Activated T-helper 1 cell treated with anti-CD3 and anti-CD28 coated beads, Interleukin-12 subunit alpha, Interleukin-12 subunit beta, Interleukin-2, Interleukin-4 antibody, amounts not matched to agents 30 ng/mL and 10 ng/mL and 1 ng/mL, durations not matched to agents 14 hours and 24 hours and 36 hours (primary cell): ENCODE measurements at regions of chr2 and their contacts with region 1.

Region 1: DNA sequence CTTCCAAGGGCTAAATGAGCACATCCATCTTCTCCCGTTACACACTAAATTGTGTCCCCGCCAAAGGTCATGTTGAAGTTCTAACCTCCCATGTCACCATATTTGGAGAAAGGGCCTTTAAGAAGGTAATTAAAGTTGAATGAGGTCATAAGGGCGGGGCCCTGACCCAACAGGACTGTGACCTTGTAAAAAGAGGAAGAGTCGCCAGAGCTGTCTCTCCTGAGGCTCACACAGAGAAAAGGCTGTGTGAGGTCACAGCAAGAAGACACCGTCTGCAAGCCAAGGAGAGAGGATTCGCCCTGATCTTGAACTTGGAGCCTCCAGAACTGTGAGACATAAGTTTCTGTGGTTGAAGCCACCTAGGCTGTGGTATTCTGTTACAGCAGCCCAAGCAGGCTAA is 24.1 kb downstream of the TRABD2A start:
- DNase-seq: peak; percentile 33
- H3K4me3 Mint-ChIP-seq: peak overlapping the region; percentile 72
- H3K27ac Mint-ChIP-seq: peak overlapping the region; percentile 83
- H3K4me1 Mint-ChIP-seq: peaks cover 85% of the 10 kb centered on the region
- H3K27me3 Mint-ChIP-seq: no peaks in the 10 kb centered on the region

Region 2: DNA sequence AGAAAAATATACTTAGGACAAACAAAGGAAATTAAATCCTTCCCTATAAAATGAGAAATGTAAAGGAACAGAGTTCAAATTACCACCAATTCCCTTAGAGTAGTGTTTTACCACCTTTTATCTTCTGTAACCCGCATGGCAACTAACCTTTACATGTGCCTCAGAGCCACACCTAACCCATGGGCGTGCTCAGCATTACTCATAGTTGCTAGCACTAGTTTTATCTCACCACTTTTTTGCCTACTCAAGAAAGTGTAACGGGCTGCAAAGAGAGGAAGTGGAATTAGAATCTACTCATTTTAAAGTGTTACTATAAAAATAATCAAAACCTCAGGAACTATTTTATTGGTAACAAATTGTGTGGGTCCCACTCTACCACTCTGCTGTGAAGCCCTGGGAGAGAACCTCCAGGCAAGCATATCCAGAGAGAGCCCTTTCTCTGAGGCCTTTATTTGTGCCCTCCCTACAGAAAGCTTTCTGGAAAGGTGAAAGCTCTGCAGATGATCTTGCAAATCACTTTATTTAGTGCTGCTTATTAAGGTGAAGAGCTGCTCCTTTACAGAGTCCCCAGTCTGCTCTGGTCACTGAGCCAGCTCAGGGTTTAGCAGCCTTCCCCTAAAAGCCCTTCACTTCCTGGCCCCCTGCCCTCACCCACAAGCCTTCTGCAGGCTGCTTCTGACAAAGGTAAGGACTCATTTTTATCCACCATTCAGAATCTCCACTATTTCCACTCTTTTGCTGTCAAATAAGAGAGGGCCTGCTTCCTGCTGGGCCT is 74.7 kb before region 1 on chr2:
- intact Hi-C with region 1: no loop called
- DNase-seq: peak; percentile 44
- H3K4me3 Mint-ChIP-seq: no peak overlapping the region
- H3K27ac Mint-ChIP-seq: peak overlapping the region; percentile 85
- H3K4me1 Mint-ChIP-seq: peaks cover 69% of the 10 kb centered on the region
- H3K27me3 Mint-ChIP-seq: no peaks in the 10 kb centered on the region

Region 3: DNA sequence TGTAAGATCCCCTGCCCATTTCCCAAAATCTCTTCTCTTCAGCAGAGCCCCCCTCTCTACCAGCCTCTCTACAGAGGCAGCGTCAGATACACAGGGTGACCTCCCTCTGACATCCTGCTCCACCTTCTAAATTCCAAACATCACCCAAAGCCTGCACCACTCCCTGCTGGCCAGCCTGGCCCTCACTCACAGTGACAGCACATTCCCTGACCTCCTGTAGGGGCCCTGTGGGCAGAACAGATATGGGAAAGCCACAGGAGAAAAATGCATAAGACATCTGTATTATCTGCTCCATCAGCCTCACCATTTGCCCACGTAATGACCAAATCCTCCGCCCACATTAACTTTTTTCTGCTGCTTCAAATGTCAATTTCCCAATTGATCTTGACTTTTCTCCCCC is 16.5 kb before region 1 on chr2:
- intact Hi-C with region 1: loop called (anchors 1 kb)
- DNase-seq: no peak
- H3K4me3 Mint-ChIP-seq: peak overlapping the region; percentile 51
- H3K27ac Mint-ChIP-seq: peak overlapping the region; percentile 24
- H3K4me1 Mint-ChIP-seq: peaks cover 55% of the 10 kb centered on the region
- H3K27me3 Mint-ChIP-seq: no peaks in the 10 kb centered on the region